ENCODE measurements at regions of chr11 and their contacts with region 1.

Region 1: GRCh38 chr11:66579017-66579606 is 10.7 kb upstream of the CTSF start:
- DNase-seq: peak; percentile 54 to 77
- H3K4me3 ChIP-seq: peak overlapping the region in 1 of 3 donors; percentile 29
- H3K27ac ChIP-seq: no peak overlapping the region
- H3K4me1 ChIP-seq: no peaks in the 10 kb centered on the region
- H3K27me3 ChIP-seq: no peaks in the 10 kb centered on the region
- CTCF ChIP-seq: peak; percentile 62 to 89 (median 79)
- POLR2A ChIP-seq: no peak

Region 2: GRCh38 chr11:66686801-66687750 is 108.0 kb after region 1 on chr11:
- intact Hi-C with region 1: loop called (anchors 10 kb)
- DNase-seq: peak in 1 of 2 donors; percentile 61
- H3K4me3 ChIP-seq: peak overlapping the region in 2 of 3 donors; percentile 9 to 25
- H3K27ac ChIP-seq: peak overlapping the region; percentile 85 to 89
- H3K4me1 ChIP-seq: no peaks in the 10 kb centered on the region
- H3K27me3 ChIP-seq: no peaks in the 10 kb centered on the region
- CTCF ChIP-seq: peak in 1 of 3 donors; percentile 3
- POLR2A ChIP-seq: no peak

Region 3: GRCh38 chr11:66868726-66869566 is 289.8 kb after region 1 on chr11:
- intact Hi-C with region 1: no loop called
- DNase-seq: peak; percentile 63 to 64
- H3K4me3 ChIP-seq: no peak overlapping the region
- H3K27ac ChIP-seq: peak overlapping the region in 1 of 2 donors; percentile 17
- H3K4me1 ChIP-seq: no peaks in the 10 kb centered on the region
- H3K27me3 ChIP-seq: no peaks in the 10 kb centered on the region
- CTCF ChIP-seq: peak; percentile 6 to 53 (median 23)
- POLR2A ChIP-seq: no peak

Region 4: DNA sequence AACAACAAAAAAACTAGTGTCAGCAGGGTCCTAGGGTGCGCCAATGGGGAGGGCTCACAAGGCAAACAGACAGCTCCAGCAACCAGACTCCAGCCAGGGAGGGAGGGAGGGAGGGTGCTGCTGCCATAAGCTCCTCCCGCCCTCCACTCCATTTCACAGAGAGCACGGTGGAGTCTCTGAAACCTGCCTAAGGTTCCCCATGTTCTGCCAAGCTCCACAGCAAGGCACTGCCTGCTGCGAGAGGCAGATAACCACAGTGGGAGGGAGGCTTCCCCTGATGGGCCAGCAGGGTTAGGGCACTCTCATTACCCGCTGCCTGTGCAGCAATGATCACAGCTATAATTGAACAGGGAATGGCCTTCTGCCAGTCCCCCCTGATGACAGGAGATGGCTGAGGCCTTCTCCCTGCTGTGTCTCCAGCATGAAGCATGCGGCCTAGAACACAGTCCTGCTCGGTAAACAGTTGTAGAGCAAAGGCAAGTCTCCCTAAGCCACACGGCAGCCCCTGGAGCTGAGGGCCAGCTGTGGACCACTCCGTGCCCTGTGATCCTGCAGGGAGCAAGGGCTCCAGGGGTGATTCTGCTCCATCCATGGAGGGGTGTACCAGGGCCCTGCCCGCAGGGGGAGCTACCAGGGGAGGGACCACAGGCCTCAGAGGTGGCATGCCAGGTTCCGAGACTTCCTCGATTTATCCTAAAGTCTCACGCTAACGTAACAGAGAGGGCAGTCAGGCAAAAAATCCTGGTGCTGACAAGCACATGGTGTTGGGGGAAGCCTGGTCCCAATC is 336.1 kb after region 1 on chr11:
- intact Hi-C with region 1: no loop called
- DNase-seq: no peak
- H3K4me3 ChIP-seq: no peak overlapping the region
- H3K27ac ChIP-seq: peak overlapping the region; percentile 48 to 58
- H3K4me1 ChIP-seq: no peaks in the 10 kb centered on the region
- H3K27me3 ChIP-seq: no peaks in the 10 kb centered on the region
- CTCF ChIP-seq: no peak
- POLR2A ChIP-seq: no peak